Mammary epithelial cell (primary cell): ENCODE measurements at regions of chr10 and their contacts with region 1.

Region 1: DNA sequence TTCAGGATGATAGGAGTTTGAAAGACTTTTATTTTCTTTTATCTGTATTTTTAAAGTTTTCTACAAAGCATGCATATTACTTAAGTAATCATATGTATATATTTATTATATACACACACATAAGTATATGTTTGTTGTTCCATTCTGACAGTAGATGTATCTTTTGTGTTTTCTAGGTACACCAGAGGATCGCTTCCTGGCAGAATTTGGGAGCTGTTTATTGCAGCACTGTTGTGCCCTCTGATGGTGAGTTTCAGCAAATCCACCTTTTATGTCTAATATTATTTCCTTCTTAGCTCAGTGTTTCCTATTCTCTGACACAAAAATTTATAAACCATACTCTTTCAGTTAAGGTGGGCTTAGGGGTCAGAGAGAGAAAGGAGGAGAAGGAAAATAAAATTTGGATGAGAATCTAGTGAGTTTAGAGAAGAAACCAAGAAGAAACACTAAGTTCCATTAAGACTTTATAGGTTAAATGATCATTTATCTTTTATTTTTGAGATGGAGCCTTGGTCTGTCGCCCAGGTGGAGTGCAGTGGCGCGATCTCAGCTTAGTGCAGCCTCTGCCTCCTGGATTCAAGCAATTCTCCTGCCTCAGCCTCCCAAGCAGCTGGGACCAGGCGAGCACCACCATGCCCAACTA is 59.2 kb upstream of the OIT3 start:
- DNase-seq: peak; percentile 41
- H3K4me3 ChIP-seq: no peak overlapping the region
- H3K27ac ChIP-seq: no peak overlapping the region
- H3K4me1 ChIP-seq: no peaks in the 10 kb centered on the region
- H3K27me3 ChIP-seq: no peaks in the 10 kb centered on the region
- CTCF ChIP-seq: peak; percentile 51 to 67

Region 2: GRCh38 chr10:72702868-72703581 is 131.3 kb before region 1 on chr10:
- CTCF ChIA-PET with region 1: interaction called, 19 read pairs
- dilution Hi-C with region 1: no loop called
- in situ Hi-C with region 1: no loop called
- intact Hi-C with region 1: no loop called
- DNase-seq: no peak
- H3K4me3 ChIP-seq: no peak overlapping the region
- H3K27ac ChIP-seq: no peak overlapping the region
- H3K4me1 ChIP-seq: no peaks in the 10 kb centered on the region
- H3K27me3 ChIP-seq: no peaks in the 10 kb centered on the region
- CTCF ChIP-seq: no peak

Region 3: DNA sequence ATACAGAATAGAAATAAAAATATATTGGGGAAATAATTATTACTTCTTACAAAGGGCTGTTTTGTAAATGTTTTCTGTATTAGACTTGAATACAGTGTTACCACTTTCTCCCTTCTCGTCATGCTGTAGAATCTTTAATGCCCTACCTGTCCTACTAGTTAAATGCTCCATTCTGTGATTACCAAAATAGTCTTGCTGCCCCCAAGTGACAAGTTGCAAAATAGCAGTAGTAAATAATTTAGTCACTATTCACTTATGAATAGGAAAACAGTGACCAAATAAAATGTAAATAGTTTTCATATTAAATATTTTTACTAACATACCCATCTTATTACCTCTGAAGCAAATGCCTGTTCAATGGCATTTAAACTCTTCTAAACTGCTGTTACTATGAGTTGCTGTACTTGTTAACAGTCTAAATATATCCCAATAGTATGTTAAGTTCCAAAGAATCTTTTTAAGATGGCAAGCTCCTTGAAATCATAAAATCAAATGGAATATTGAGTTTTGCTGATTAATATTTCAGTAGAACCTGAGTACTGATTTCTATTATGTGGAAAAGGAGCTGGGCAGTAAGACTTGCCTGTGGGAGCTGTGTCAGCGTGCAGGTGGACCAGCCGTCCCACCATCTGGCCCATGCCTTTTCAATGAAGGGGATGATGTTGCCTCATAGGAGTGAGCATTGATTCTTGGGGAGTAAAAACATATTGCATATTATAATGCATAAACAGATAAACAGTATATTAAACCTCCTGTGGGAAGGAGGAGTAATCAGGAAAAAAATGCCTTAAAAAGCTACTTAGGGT is 41.1 kb after region 1 on chr10:
- CTCF ChIA-PET with region 1: no interaction called
- dilution Hi-C with region 1: no loop called
- in situ Hi-C with region 1: no loop called
- intact Hi-C with region 1: loop called (anchors 1 kb)
- DNase-seq: peak; percentile 33
- H3K4me3 ChIP-seq: no peak overlapping the region
- H3K27ac ChIP-seq: no peak overlapping the region
- H3K4me1 ChIP-seq: no peaks in the 10 kb centered on the region
- H3K27me3 ChIP-seq: no peaks in the 10 kb centered on the region
- CTCF ChIP-seq: peak; percentile 42 to 54

Region 4: DNA sequence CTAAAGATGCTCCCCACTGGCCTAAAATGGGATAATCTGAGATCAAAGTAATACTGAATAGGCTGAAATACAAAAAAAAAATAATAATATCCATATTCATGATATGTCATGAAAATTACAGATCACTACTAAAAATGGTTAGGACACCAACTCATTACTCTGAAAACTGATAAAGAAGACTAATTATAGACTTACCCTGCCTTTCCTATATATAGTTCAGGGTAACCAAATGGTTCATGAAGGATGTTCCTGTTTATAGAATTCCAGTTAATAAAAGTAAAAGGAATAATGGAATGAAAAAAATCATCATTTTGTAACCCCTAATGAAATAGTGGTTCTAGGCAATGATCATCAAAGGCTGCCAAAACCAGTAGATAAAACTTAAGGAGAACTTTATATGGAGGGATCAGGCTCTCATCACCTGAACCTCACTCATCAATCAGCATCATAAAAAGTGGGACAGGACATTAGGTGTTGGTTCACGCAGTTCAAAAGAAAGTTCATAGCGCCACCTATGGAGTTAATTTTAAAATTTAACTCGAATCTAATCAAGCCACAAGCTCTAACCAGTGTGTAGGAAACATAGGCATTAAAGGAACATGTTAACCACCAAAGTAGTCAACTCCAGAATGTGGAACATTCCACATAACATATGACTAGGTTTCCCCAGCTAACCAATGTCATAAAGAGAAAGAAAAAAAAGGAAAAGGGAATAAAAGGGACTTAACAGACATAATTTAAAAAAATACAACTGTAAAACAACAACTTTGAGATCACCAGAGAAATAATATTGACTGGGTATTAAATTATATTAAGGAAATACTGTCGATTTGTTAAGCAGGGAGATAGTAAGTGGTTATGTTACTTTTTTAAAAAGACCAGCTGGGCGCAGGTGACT is 226.7 kb after region 1 on chr10:
- CTCF ChIA-PET with region 1: no interaction called
- dilution Hi-C with region 1: no loop called
- in situ Hi-C with region 1: no loop called
- intact Hi-C with region 1: loop called (anchors 10 kb)
- DNase-seq: peak; percentile 37
- H3K4me3 ChIP-seq: no peak overlapping the region
- H3K27ac ChIP-seq: no peak overlapping the region
- H3K4me1 ChIP-seq: no peaks in the 10 kb centered on the region
- H3K27me3 ChIP-seq: no peaks in the 10 kb centered on the region
- CTCF ChIP-seq: peak; percentile 34 to 58